K562 (cell line): ENCODE measurements at regions of chr9 and their contacts with region 1.

Region 1: GRCh38 chr9:130981756-130982137 is 27.2 kb upstream of the LAMC3 start:
- DNase-seq: peak in 2 of 4 experiments; percentile 29 to 68
- ATAC-seq: no peak
- H3K4me3 ChIP-seq: no peak overlapping the region
- H3K27ac ChIP-seq: no peak overlapping the region
- H3K4me1 ChIP-seq: peaks cover 0 to 25% of the 10 kb centered on the region in 2 experiments; a peak in 1 of 5 replicates
- H3K27me3 ChIP-seq: peaks cover 91 to 98% of the 10 kb centered on the region in 2 experiments
- CTCF ChIP-seq: no peak
- EP300 ChIP-seq: no peak
- POLR2A ChIP-seq: no peak
- RAD21 ChIP-seq: no peak

Region 2: DNA sequence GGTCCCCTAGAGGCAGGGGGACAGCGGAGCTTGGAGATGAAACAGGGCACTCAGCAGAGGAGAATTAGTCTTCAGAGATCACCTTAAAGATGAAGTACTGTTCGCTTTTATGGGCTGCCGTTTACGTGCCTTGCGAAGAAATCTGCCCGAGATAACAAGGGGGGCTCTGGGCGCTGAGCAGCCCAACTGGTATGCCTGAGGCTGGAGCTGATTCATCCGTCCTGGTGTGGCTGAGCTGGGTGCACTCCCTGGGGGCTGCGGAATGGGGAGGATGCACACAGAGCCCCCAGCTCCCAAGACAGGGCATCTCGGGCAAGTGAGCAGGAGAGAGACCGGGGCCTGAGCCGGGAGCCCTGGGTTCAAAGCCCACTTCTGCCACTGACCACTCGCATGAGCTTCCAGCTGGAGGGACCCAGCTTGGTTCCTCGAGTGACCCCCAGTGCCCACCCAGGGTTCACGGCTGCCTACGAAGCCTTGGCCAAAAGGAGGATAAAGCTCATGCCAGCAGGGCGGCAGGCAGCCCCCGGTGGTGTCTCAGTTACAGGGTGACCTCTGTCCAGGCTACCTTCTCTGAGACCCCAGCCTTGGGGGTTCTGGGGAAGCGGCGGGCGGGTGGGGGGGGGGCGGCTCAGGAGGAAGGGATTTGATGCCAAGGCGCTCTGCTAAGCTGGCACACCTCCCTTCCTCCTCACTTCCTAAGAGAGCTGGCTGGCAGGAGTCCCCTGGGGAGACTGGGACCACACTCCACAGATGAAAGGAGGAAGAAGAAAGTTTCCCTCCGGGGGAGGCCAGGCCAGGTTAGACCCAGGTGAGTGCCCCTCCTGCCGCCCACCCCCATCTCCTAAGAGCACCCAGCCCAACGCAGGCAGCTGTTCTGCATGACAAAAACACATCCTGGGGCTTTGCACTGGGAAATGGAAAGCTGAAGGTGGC is 48.4 kb before region 1 on chr9:
- CTCF ChIA-PET with region 1: no interaction called
- POLR2A ChIA-PET with region 1: interaction called, 10 read pairs
- in situ Hi-C with region 1: no loop called
- intact Hi-C with region 1: no loop called
- DNase-seq: peak in 2 of 4 experiments; percentile 68 to 70
- ATAC-seq: no peak; the same call in 1 of the 3 replicates
- H3K4me3 ChIP-seq: no peak overlapping the region
- H3K27ac ChIP-seq: no peak overlapping the region
- H3K4me1 ChIP-seq: peaks cover 0 to 42% of the 10 kb centered on the region in 2 experiments; a peak in 2 of 5 replicates
- H3K27me3 ChIP-seq: peaks cover 97 to 98% of the 10 kb centered on the region in 2 experiments
- CTCF ChIP-seq: no peak
- EP300 ChIP-seq: no peak
- POLR2A ChIP-seq: no peak
- RAD21 ChIP-seq: no peak

Region 3: DNA sequence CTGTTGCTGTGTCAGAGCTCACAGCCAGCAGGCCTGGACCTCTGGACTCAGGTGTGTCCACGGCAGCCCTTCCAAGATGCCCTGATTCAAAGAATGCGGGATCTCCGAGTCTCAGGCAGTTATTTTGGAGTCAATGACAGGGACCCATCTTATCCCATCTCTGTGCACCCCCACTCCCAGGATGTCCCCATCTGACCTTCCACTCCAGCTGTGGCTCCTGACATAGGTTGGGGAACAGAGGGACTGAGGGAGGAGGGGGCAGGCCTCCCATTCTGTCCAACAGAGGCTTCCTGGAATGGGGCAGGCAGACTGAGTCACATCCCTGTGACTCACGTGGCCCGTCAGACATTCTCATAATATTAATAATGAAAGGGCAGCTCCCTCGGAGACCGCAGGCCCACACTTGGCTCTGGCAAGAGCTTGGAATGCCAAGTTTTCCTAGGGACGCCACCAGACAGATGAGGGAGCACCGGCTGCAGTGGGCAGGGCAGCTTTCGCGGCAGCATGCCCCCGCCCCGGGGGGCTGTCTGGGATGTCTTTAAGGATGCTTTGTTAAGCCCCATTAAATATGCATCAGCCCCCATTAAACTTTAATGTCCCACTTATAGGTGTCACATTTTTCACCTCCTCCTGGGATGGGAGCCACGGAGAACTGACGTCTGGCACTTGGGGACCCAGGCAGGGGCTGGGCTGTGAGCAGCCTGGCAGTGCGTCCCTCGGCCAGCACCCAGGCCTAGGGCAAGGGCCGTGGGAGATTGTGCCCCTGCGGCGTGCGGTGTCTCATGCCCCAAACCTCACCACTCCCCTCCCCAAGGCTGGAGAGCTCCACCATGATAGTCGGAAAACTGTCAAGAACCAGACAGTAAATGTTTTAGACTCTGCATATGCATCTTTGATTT is 19.1 kb before region 1 on chr9:
- CTCF ChIA-PET with region 1: no interaction called
- POLR2A ChIA-PET with region 1: interaction called, 45 read pairs
- in situ Hi-C with region 1: no loop called
- intact Hi-C with region 1: no loop called
- DNase-seq: peak; percentile 40 to 66 (median 61)
- ATAC-seq: peak; percentile 12
- H3K4me3 ChIP-seq: no peak overlapping the region
- H3K27ac ChIP-seq: no peak overlapping the region
- H3K4me1 ChIP-seq: peaks cover 0 to 9% of the 10 kb centered on the region in 2 experiments; a peak in 1 of 5 replicates
- H3K27me3 ChIP-seq: peaks cover 62 to 76% of the 10 kb centered on the region in 2 experiments
- CTCF ChIP-seq: no peak
- EP300 ChIP-seq: no peak
- POLR2A ChIP-seq: no peak
- RAD21 ChIP-seq: no peak